Activated CD4-positive, alpha-beta memory T cell treated with anti-CD3 and anti-CD28 coated beads for 36 hours (primary cell): ENCODE measurements at regions of chr9 and their contacts with region 1.

Region 1: DNA sequence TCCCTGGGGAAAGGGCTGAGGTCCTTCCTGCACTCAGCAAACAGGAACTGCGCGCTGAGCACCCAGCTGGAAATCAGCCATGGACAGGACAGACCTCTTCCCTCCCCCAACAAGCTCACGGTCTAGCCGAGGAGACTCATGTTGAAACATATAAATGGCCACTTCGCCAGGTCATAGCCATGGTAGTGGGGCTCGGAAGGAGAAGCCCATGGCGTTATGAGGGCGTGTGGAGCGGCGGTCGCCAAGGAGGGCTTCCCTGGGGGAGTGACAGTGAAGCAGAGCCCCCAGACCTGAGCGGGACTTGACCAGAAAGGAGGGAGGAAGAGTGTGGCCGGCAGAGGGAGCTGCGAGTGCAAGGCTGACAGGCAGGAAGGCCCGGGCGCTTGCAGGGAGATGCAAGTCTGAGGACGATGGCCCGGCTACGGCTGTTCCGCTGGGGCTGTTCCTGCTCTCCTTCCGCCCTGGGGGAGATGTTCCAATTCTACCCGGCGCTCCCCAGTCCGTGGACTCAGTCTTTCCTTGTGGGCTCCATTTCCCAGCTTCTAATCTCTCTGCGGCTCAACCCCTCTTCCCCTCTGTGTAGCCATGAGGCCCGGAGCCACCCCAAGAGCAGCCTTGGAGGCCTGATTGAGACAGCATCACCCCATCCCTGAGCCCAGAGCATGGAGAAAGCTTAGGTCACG is 43.9 kb upstream of the PRRC2B start:
- DNase-seq: peak; percentile 92
- H3K4me3 Mint-ChIP-seq: no peak overlapping the region
- H3K27ac Mint-ChIP-seq: no peak overlapping the region
- H3K4me1 Mint-ChIP-seq: peaks cover 5% of the 10 kb centered on the region
- H3K27me3 Mint-ChIP-seq: no peaks in the 10 kb centered on the region

Region 2: DNA sequence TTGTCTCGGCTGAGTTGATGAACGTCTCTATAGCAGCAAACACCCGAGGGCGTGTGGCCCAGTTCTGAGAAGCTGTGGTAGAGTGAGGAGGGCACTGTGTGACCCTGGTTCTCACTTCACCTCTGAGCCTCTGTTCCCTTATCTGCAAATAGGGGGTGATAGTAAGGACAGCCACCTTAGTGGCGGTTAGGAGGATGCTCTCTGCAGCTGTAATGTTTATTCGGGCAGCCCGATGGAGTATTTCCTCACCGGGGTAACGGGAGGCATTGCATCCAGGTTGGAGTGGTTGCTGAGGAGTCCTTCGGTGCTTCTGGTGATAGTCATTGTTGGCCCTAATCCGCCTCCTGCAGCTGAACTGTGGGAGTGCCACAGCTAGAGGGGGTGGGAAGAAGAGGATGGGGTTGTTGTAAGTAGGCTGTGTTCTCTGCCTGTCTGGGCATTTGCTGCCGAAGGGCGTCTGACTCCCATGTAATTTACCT is 57.7 kb after region 1 on chr9:
- CTCF ChIA-PET with region 1: interaction called, 9 read pairs
- POLR2A ChIA-PET with region 1: no interaction called
- intact Hi-C with region 1: loop called (anchors 5 kb)
- DNase-seq: peak; percentile 53
- H3K4me3 Mint-ChIP-seq: peak overlapping the region; percentile 54
- H3K27ac Mint-ChIP-seq: peak overlapping the region; percentile 65
- H3K4me1 Mint-ChIP-seq: peaks cover 89% of the 10 kb centered on the region
- H3K27me3 Mint-ChIP-seq: no peaks in the 10 kb centered on the region

Region 3: DNA sequence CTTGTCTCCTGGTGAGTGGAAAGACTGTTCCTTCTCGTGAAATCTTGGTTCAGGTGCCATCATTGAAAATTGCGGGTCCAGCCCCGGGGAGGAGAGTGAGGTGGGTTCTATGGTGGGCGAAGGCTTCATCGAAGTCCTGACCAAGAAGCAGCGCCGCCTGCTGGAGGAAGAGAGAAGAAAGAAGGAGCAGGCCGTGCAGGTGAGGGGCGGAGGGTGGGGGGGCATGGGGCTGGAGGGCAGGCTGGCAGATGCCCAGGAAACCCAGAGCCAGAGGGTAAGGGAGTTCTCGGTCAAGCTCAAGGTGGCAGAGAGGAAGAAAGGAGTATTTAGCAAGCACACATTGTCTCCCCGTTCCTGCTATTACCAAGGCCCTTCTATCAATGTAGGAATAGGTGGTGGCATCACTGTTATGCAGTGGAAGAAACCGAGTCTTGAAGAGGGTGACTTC is 128.4 kb after region 1 on chr9:
- CTCF ChIA-PET with region 1: interaction called, 43 read pairs
- POLR2A ChIA-PET with region 1: no interaction called
- intact Hi-C with region 1: loop called (anchors 2 kb)
- DNase-seq: peak; percentile 69
- H3K4me3 Mint-ChIP-seq: no peak overlapping the region
- H3K27ac Mint-ChIP-seq: no peak overlapping the region
- H3K4me1 Mint-ChIP-seq: peaks cover 11% of the 10 kb centered on the region
- H3K27me3 Mint-ChIP-seq: no peaks in the 10 kb centered on the region

Region 4: GRCh38 chr9:131559421-131560000 is 209.5 kb after region 1 on chr9:
- CTCF ChIA-PET with region 1: interaction called, 10 read pairs
- POLR2A ChIA-PET with region 1: no interaction called
- intact Hi-C with region 1: no loop called
- DNase-seq: no peak
- H3K4me3 Mint-ChIP-seq: no peak overlapping the region
- H3K27ac Mint-ChIP-seq: no peak overlapping the region
- H3K4me1 Mint-ChIP-seq: no peaks in the 10 kb centered on the region
- H3K27me3 Mint-ChIP-seq: peaks cover 12% of the 10 kb centered on the region

Region 5: GRCh38 chr9:131747356-131747755 is 397.3 kb after region 1 on chr9:
- CTCF ChIA-PET with region 1: interaction called, 5 read pairs
- POLR2A ChIA-PET with region 1: no interaction called
- intact Hi-C with region 1: loop called (anchors 1 kb)
- DNase-seq: peak; percentile 51
- H3K4me3 Mint-ChIP-seq: no peak overlapping the region
- H3K27ac Mint-ChIP-seq: peak overlapping the region; percentile 49
- H3K4me1 Mint-ChIP-seq: peaks cover 29% of the 10 kb centered on the region
- H3K27me3 Mint-ChIP-seq: no peaks in the 10 kb centered on the region